ENCODE measurements at regions of chr16 and their contacts with region 1.

Region 1: DNA sequence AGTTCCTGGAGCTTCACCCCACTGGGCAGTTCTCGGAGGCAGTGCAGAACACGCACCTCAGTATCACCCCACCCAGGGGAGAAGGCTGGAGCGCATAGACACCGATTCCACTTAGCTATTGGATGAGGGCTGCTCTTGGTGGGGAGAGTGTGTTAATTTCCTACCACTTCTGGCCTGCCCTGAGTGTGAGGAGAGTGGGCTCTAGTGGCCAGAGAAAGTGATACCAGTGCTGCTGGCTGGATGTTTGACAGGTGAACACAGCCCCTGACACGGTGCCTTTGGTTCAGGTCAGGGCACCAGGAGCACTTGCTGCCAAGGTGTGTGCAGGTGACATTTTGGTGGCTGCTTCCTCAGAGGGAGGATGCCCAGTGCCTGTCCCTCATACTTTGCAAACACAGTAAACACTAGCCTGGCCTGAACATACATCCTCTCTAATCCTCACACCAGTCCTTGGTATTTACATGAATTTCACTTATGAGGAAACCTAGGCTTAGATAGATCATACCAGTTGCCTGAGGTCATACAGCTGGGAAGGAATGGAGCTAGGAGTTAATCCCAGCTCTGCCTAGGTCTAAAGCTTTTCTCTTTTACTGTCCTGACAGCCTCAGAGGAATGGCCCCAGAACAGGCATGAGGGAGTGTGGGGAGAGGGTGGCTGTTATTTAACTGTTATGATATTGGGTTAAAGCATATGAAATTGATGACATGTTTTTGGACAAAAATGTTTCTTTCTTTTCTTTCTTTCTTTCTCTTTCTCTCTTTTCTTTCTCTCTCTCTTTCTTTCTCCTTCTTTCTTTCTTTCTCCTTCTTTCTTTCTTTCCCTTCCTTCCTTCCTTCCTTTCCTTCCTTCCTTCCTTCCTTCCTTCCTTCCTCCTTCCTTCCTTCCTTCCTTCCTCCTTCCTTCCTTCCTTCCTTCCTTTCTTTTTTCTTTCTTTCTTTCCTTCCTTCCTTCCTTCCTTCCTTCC is 21.0 kb upstream of the ITGAX start:
- DNase-seq: peak in 1 of 2 donors; percentile 58
- ATAC-seq: peak; percentile 81 to 88 (median 84)
- H3K4me3 ChIP-seq: no peak overlapping the region
- H3K4me3 Mint-ChIP-seq: no peak overlapping the region
- H3K27ac ChIP-seq: no peak overlapping the region
- H3K27ac Mint-ChIP-seq: peak overlapping the region; percentile 53 to 79
- H3K4me1 ChIP-seq: peaks cover 21% of the 10 kb centered on the region
- H3K4me1 Mint-ChIP-seq: peaks cover 37 to 39% of the 10 kb centered on the region in 2 donors
- H3K27me3 ChIP-seq: no peaks in the 10 kb centered on the region
- H3K27me3 Mint-ChIP-seq: peaks cover 4 to 6% of the 10 kb centered on the region in 2 donors
- CTCF ChIP-seq: peak; percentile 21

Region 2: DNA sequence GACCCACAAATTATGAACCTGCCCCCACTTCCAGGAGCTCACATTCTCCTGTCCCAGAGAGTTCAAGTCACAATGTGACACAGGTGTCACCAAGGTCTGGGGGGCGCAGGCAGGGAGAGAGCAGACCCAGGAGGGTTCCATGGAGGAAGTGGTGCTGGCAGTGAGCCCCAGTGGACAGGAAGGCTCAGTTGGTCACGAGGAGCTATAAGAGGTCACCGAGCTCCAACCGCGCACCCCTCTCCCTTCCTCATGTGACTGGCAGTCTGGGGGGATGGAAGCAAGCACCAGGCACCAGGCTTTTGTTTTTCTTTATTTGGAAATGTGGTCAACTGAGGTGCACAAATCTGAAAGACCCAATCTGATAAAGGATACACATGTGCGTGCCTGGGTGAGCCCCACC is 61.7 kb after region 1 on chr16:
- intact Hi-C with region 1: no loop called
- DNase-seq: no peak
- ATAC-seq: no peak
- H3K4me3 ChIP-seq: no peak overlapping the region
- H3K4me3 Mint-ChIP-seq: no peak overlapping the region
- H3K27ac ChIP-seq: no peak overlapping the region
- H3K27ac Mint-ChIP-seq: no peak overlapping the region
- H3K4me1 ChIP-seq: peaks cover 49% of the 10 kb centered on the region
- H3K4me1 Mint-ChIP-seq: peaks cover 37 to 42% of the 10 kb centered on the region in 2 donors
- H3K27me3 ChIP-seq: no peaks in the 10 kb centered on the region
- H3K27me3 Mint-ChIP-seq: peaks cover 0 to 3% of the 10 kb centered on the region in 2 donors
- CTCF ChIP-seq: no peak

Region 3: GRCh38 chr16:31430380-31431052 is 96.5 kb after region 1 on chr16:
- intact Hi-C with region 1: loop called (anchors 10 kb)
- DNase-seq: no peak
- ATAC-seq: peak in 2 of 3 donors; percentile 18 to 19
- H3K4me3 ChIP-seq: no peak overlapping the region
- H3K4me3 Mint-ChIP-seq: peak overlapping the region; percentile 13
- H3K27ac ChIP-seq: no peak overlapping the region
- H3K27ac Mint-ChIP-seq: peak overlapping the region in 1 of 2 donors; percentile 59
- H3K4me1 ChIP-seq: peaks cover 43% of the 10 kb centered on the region
- H3K4me1 Mint-ChIP-seq: peaks cover 26 to 37% of the 10 kb centered on the region in 2 donors
- H3K27me3 ChIP-seq: no peaks in the 10 kb centered on the region
- H3K27me3 Mint-ChIP-seq: no peaks in the 10 kb centered on the region
- CTCF ChIP-seq: no peak

Measured in natural killer cell (primary cell).